Naive thymus-derived CD8-positive, alpha-beta T cell (primary cell): ENCODE measurements at regions of chr19 and their contacts with region 1.

Region 1: DNA sequence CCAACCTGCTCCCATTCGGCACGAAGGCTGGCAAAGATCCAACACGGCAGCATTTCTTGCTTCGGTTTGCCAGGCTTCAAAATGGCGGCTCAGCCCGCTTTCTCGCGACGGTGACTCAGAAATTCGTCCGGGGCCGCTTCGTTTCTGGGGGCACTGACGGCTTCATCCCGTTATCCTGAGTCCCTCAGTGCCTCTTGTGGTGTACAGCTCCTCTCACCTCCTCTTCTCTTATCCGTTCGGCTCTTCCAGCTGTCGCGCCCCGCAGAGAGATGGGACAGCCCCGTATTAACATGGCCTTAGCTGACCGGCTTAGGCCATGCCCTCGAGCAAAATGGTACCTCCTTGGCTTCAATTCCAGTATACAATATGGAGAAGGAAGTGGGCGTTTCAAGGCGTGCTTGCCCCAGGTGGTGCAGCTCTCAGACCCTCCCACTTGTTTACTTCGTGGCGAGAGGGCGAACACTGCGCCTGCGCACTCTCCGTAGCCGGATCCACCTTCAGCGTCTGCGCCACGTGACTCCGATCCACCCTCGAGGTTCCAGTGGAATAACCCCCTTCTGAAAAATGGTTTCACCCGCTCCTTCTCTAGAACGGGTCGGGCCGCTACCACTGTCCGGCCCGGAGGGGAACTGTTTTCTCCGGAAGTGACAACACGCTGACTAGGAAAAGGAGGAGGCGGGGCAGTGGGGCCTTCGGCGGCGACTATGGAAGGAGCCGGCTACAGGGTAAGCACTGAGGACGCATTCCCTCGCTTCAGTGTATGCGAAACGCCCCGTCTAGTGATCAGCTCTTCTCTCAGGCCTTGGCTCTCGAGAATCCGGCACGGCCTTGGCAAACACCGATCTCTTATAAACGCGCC is at the starts of genes AKT1S1 and TBC1D17:
- DNase-seq: peak; percentile 91 to 100 (median 99)
- ATAC-seq: peak; percentile 67 to 72
- H3K4me3 Mint-ChIP-seq: no peak within 1 kb of the TSS
- H3K27ac Mint-ChIP-seq: no peak within 1 kb of the TSS
- H3K4me1 Mint-ChIP-seq: peaks cover 15 to 33% (median 22%) of the 10 kb centered on the region in 4 donors
- H3K27me3 Mint-ChIP-seq: no peaks in the 10 kb centered on the region
- polyA plus RNA-seq, gene AKT1S1: 2.6 to 4.5 (median 3.9) TPM
- polyA plus RNA-seq, gene TBC1D17: 8.1 to 17.7 (median 11.3) TPM

Region 2: DNA sequence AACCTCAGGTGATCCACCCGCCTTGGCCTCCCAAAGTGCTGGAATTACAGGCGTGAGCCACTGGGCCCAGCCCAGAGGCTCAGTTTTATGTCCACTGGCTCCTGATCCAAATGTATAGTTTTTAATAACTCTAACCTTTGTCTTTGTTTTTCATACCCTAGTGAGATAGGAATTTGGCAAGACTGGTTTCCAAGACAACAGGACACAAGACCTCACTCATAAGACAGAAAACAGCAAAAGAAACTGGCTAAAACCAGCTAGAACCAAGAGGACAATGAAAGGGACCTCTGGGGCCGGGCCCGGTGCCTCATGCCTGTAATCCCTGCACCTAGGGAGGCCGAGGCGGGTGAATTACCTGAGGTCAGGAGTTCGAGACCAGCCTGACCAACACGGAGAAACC is 158.7 kb before region 1 on chr19:
- POLR2A ChIA-PET with region 1: interaction called, 12 read pairs
- DNase-seq: no peak
- ATAC-seq: no peak
- H3K4me3 Mint-ChIP-seq: peak overlapping the region; percentile 52 to 97 (median 80)
- H3K27ac Mint-ChIP-seq: peak overlapping the region; percentile 60 to 100 (median 98)
- H3K4me1 Mint-ChIP-seq: peaks cover 6 to 32% (median 10%) of the 10 kb centered on the region in 4 donors
- H3K27me3 Mint-ChIP-seq: no peaks in the 10 kb centered on the region

Region 3: DNA sequence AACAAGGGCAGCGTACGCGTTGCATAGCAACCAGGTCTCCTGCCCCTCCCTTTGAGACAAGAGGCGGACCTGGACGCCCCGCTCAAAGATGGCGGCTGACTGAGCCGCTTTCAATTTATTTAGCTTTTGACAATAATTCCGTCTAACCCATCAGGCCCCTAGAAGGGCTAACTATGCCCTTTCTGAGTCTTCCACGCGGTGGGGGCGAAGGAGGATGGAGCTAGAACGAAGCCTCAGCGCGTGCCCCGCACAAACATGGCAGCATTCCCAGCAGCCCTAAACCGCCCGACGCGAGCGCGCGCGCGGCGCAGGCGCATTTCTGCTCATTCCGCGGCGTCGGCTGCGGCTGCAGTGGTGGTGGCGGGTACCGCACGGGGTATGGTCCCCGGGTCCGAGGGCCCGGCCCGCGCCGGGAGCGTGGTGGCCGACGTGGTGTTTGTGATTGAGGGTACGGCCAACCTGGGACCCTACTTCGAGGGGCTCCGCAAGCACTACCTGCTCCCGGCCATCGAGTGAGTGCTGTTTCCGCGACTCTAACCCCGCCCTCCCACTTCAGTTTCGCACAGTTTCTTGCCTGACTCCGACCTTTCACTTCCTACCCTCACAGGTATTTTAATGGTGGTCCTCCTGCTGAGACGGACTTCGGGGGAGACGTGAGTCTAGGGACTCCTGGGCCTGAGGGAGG is 59.1 kb before region 1 on chr19 and contains the start of gene MED25:
- POLR2A ChIA-PET with region 1: interaction called, 30 read pairs
- DNase-seq: peak; percentile 81 to 98 (median 89)
- ATAC-seq: peak; percentile 55
- H3K4me3 Mint-ChIP-seq: peak within 1 kb of the TSS; percentile 94 to 100 (median 99)
- H3K27ac Mint-ChIP-seq: peak within 1 kb of the TSS; percentile 98 to 100 (median 100)
- H3K4me1 Mint-ChIP-seq: peaks cover 11 to 40% (median 32%) of the 10 kb centered on the region in 4 donors
- H3K27me3 Mint-ChIP-seq: peaks cover 0 to 2% (median 0%) of the 10 kb centered on the region in 5 donors
- polyA plus RNA-seq, gene MED25: 7.5 to 19.2 (median 13.1) TPM

Region 4: GRCh38 chr19:49862376-49863253 is 14.6 kb before region 1 on chr19:
- POLR2A ChIA-PET with region 1: interaction called, 62 read pairs
- DNase-seq: peak in 1 of 10 donors; percentile 37
- ATAC-seq: no peak
- H3K4me3 Mint-ChIP-seq: no peak overlapping the region
- H3K27ac Mint-ChIP-seq: peak overlapping the region in 4 of 10 donors; percentile 27 to 74 (median 43)
- H3K4me1 Mint-ChIP-seq: peaks cover 15 to 39% (median 37%) of the 10 kb centered on the region in 4 donors
- H3K27me3 Mint-ChIP-seq: no peaks in the 10 kb centered on the region

Region 5: GRCh38 chr19:49929611-49930482 is 52.6 kb after region 1 on chr19:
- POLR2A ChIA-PET with region 1: interaction called, 42 read pairs
- DNase-seq: peak; percentile 77 to 99 (median 95)
- ATAC-seq: peak; percentile 81 to 89
- H3K4me3 Mint-ChIP-seq: peak overlapping the region; percentile 93 to 100 (median 99)
- H3K27ac Mint-ChIP-seq: peak overlapping the region; percentile 95 to 99 (median 98)
- H3K4me1 Mint-ChIP-seq: peaks cover 43 to 75% (median 67%) of the 10 kb centered on the region in 4 donors
- H3K27me3 Mint-ChIP-seq: peaks cover 0 to 5% (median 0%) of the 10 kb centered on the region in 5 donors